Dorsolateral prefrontal cortex (tissue), 120 donors: ENCODE measurements at regions of chr17 and their contacts with region 1.

Region 1: DNA sequence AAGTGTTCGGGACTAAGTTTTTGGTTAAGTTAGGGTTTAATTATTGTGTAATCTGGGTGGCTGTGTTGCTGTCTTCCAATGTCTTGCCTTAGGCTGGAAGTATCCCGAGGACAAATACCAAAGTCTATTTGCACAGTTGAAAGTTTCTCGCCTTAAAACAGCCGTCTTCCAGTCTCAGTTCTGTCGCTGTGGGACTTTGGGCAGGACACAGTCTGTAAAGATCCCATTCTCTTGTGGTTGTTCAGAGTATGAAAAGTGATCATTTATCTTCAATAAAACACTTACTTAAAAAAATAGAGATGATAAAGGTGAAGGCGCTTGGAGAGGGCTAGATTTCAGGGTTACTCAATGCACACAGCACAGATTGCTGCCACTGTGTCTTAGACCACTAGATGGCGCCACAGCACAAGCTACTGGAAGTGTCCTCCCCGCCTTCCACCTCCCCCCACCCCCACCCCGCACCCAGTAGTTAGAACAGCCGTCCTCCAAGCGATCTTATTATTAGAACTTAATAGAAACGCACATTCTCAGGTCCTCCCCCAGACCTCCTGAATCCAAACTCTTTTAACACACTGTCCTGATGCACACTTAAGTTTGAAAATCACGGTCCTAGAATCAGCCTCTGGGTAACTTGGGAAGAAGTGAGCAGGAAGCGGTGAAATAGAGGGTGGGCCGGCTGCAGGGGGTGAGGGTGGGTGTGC is 45.9 kb downstream of the AKAP1 start:
- DNase-seq: peak; percentile 76 to 94 (median 83)
- H3K4me3 ChIP-seq: peak overlapping the region in 20 of 59 donors; percentile 4 to 53 (median 32)
- H3K27ac ChIP-seq: no peak overlapping the region
- H3K27me3 ChIP-seq: no peaks in the 10 kb centered on the region
- CTCF ChIP-seq: peak; percentile 77 to 98 (median 92)

Region 2: DNA sequence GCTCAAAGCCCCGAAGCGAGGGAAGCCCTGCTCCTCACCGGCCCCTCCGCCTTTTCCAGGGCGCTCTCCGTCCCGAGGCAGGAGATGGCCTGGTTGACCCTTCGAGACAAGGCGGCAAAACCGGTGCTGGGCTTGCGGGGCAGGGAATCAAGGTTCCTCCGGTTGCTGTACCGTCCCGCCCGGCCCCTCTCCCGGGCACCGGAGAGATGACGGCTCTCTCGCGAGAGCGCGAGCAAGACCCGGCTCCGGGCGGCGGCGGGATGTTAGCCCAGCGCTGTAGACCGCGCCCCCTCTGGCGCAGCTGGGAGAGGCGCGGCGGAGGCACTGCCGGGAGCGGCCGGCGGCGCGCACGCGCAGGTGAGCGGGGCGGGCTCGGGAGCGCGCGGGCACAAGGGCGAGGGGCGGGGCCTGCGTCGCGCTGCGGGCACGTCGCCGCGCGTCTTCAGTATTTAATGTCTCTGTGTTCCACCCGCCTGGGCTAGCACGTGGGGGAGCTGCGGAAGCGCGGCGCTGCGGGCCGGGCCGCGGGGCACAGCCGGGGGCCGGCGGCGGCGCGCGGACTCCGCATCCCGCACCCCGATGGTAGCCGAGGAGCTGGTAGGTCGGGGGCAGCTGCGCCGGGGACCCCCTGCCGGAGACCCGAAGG is 46.0 kb before region 1 on chr17 and contains the start of gene AKAP1:
- intact Hi-C with region 1: no loop called
- DNase-seq: peak; percentile 81 to 97 (median 91)
- H3K4me3 ChIP-seq: peak within 1 kb of the TSS; percentile 62 to 99 (median 90)
- H3K27ac ChIP-seq: peak within 1 kb of the TSS; percentile 72 to 99 (median 95)
- H3K27me3 ChIP-seq: no peaks in the 10 kb centered on the region
- CTCF ChIP-seq: peak in 47 of 56 donors; percentile 8 to 70 (median 47)
- total RNA-seq, gene AKAP1: 37.5 to 77.9 (median 57.2) TPM

Region 3: DNA sequence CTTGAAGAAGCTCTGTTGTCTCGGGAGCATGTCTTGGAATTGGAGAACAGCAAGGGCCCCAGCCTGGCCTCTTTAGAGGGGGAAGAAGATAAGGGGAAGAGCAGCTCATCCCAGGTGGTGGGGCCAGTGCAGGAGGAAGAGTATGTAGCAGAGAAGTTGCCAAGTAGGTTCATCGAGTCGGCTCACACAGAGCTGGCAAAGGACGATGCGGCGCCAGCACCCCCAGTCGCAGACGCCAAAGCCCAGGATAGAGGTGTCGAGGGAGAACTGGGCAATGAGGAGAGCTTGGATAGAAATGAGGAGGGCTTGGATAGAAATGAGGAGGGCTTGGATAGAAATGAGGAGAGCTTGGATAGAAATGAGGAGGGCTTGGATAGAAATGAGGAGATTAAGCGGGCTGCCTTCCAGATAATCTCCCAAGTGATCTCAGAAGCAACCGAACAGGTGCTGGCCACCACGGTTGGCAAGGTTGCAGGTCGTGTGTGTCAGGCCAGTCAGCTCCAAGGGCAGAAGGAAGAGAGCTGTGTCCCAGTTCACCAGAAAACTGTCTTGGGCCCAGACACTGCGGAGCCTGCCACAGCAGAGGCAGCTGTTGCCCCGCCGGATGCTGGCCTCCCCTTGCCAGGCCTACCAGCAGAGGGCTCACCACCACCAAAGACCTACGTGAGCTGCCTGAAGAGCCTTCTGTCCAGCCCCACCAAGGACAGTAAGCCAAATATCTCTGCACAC is 24.6 kb before region 1 on chr17:
- intact Hi-C with region 1: no loop called
- DNase-seq: peak in 1 of 10 donors; percentile 79
- H3K4me3 ChIP-seq: no peak overlapping the region
- H3K27ac ChIP-seq: peak overlapping the region in 1 of 59 donors; percentile 73
- H3K27me3 ChIP-seq: no peaks in the 10 kb centered on the region
- CTCF ChIP-seq: peak in 8 of 56 donors; percentile 7 to 21 (median 12)

Region 4: DNA sequence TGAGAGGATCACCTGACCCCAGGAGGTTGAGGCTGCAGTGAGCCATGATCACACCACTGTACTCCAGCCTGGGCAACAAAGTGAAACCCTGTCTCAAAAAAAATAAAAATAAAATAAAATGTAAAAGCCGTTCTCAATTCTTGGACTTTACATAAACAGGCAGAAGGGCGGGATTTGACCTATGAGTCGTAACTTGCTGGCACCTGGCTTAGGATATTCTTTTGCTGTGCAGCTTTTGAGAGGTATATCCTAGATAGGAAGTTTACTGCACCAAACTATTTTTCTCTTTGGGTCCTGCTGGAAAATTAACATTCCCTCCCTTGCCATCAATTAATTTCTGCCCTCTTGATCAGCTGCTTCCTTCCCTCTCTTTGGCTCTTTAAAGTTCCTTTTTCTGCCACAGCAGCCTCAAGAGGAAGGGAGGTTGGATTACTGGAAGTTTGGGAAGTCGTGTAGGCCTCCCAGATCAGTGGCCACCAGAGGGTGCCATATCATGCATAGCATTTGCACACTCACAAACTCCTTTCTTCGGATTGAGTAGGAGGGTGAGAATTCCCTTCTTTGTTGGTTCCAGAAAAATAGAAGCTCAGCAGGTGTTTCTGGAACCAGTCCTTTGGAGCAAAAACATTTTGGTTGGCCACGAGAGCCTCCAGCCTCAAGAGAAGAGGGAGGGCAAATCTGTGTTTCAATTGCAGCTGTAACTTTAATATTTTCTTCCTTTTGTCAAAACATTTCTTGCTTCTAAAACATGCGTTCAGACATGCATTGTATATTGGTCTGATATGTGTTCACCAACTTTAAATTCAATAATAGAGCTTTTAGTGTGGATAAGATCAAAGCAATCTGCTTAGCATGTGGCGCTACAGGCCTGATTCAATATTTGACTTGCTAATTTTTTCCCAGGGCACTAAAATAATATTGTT is 466.9 kb after region 1 on chr17:
- intact Hi-C with region 1: loop called in 1 of 2 experiments (anchors 10 kb)
- DNase-seq: peak in 9 of 10 donors; percentile 47 to 86 (median 76)
- H3K4me3 ChIP-seq: no peak overlapping the region
- H3K27ac ChIP-seq: peak overlapping the region in 44 of 59 donors; percentile 0 to 82 (median 48)
- H3K27me3 ChIP-seq: no peaks in the 10 kb centered on the region
- CTCF ChIP-seq: peak; percentile 74 to 97 (median 89)

Region 5: DNA sequence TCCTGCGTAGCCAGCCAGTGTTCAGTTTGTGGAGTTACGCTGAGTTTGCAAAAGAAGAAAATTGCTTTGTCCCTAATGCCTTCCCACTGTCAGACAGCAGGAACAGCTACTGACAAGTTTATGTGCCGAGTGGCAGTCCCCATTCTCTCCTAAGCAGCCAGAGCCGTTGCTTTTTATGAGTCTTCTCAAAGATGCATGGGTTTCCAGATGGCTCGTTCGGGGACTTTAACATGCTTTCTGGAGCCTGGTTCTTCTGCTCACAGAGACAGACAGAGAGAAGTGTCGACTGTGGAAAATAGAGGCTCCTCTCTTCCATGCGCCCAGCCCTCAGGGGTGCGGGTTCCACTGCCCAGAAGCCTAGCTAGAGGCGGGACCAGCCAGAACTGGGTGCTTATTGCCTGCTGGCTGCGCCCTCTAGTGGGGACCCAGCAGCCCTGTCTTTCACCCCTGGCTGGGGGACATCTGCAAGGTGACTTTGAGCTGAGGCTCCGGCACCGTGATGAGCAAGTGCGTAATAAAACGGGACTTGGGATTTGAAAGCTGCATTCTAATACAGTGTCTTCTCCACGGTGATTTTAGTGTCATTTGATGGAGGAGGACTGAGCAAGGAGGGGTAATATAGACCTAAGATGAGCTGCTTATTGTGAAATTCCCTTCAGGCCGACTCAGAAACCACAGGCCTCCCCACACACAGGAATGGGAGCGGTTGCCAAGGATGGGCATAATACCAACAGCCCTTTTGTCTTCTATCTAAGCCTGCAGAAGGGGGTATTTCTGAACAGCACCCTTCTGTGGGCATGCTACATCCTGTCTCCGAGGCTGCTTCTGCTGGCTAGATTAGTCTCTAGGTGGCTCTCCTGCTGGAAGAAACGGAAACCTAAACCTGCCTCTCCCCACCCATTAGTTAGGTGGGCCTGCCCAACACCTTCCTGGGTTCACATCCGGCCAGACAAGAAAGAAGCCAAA is 541.0 kb after region 1 on chr17:
- intact Hi-C with region 1: loop called (anchors 2 to 10 kb)
- DNase-seq: peak; percentile 68 to 88 (median 81)
- H3K4me3 ChIP-seq: peak overlapping the region in 22 of 59 donors; percentile 0 to 42 (median 22)
- H3K27ac ChIP-seq: peak overlapping the region in 54 of 59 donors; percentile 20 to 83 (median 65)
- H3K27me3 ChIP-seq: no peaks in the 10 kb centered on the region
- CTCF ChIP-seq: peak; percentile 81 to 99 (median 95)

Region 6: DNA sequence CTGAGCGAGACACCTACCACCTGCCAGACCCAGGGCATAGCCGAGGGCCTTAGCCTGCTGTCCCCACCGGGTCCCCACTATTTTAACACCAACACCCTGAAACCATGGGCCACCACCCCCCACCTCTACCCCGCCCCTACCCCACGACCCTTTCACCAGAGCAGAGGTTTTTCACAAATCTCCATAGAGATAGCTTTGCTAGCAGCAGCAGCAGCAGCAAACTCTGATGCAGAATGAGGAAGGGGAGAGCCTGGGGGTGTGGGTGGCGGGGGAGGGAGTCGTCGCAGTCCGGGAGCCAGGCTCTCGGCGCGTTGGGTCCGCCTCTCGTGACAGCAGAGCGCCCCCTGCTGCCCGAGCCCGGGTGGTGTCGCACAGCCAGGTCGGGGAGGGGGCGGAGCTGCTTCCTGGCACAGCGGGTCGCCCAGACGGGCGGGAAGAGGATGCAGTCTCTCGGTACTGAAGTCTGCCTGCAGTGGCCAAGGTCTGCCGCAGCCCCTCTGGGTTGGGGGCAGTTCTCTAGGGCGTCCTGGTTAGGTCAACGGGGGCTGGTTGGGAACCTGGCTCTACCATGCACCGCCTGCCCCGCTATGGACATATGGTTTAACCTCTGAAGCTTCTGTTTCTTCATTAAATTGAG is 652.3 kb after region 1 on chr17:
- intact Hi-C with region 1: loop called in 1 of 2 experiments (anchors 5 kb)
- DNase-seq: peak in 9 of 10 donors; percentile 55 to 77 (median 66)
- H3K4me3 ChIP-seq: peak overlapping the region in 57 of 59 donors; percentile 6 to 61 (median 36)
- H3K27ac ChIP-seq: peak overlapping the region in 4 of 59 donors; percentile 17 to 54 (median 28)
- H3K27me3 ChIP-seq: peaks cover 0 to 10% (median 0%) of the 10 kb centered on the region in 45 donors
- CTCF ChIP-seq: peak; percentile 60 to 93 (median 87)

Region 7: DNA sequence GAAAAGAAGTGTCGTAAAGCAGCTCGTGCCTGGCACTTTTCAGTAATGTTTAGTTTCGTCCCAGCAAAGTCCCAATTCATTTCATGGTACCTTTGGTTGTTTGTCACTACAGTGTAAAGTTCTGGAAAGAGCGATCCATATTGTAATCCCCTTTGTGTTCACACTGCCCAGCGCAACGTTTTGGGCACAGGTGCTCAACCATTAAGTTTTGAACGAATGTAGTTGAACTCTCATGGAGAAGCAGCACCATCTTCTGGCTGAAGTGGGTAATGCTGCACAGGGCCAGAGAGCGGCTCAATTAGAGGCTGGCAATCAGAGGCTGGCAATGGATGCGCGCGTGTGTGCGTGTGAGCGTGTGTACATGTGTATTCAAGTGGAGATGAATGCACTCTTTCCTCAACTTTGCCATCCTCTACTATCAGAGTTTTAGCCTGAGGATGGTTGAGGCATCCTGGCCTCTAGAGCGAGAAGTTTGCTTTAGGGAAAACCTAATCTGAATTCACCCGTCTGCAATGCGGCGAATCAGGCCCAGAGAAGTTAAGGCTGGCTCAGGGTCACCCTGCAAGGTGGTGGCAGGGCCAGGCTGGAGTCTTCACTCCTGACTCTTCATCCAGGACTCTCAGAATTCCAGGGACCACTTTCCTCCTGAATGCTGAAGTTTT is 982.2 kb after region 1 on chr17:
- intact Hi-C with region 1: loop called in 1 of 2 experiments (anchors 5 kb)
- DNase-seq: peak; percentile 67 to 90 (median 79)
- H3K4me3 ChIP-seq: peak overlapping the region in 3 of 59 donors; percentile 9 to 27 (median 22)
- H3K27ac ChIP-seq: no peak overlapping the region
- H3K27me3 ChIP-seq: peaks cover 0 to 4% (median 0%) of the 10 kb centered on the region in 45 donors
- CTCF ChIP-seq: peak; percentile 78 to 98 (median 94)